Sigmoid colon (tissue), 7 donors: ENCODE measurements at regions of chr2 and their contacts with region 1.

Region 1: GRCh38 chr2:100242891-100243619 is 79.2 kb downstream of the LONRF2 start:
- DNase-seq: peak; percentile 84
- H3K4me3 ChIP-seq: no peak overlapping the region
- H3K27ac ChIP-seq: no peak overlapping the region
- H3K4me1 ChIP-seq: peaks cover 0 to 10% (median 8%) of the 10 kb centered on the region in 4 donors
- H3K27me3 ChIP-seq: no peaks in the 10 kb centered on the region
- CTCF ChIP-seq: peak; percentile 67 to 76 (median 73)
- EP300 ChIP-seq: no peak
- POLR2A ChIP-seq: no peak

Region 2: GRCh38 chr2:99819766-99820165 is 423.3 kb before region 1 on chr2:
- intact Hi-C with region 1: loop called (anchors 10 kb)
- DNase-seq: no peak
- H3K4me3 ChIP-seq: no peak overlapping the region
- H3K27ac ChIP-seq: no peak overlapping the region
- H3K4me1 ChIP-seq: no peaks in the 10 kb centered on the region
- H3K27me3 ChIP-seq: no peaks in the 10 kb centered on the region
- CTCF ChIP-seq: no peak
- EP300 ChIP-seq: no peak
- POLR2A ChIP-seq: no peak